MCF 10A (cell line): ENCODE measurements at regions of chr2 and their contacts with region 1.

Region 1: GRCh38 chr2:226984750-226985582 is 149.1 kb downstream of the RHBDD1 start:
- DNase-seq: peak; percentile 61
- H3K4me3 Mint-ChIP-seq: no peak overlapping the region
- H3K27ac Mint-ChIP-seq: no peak overlapping the region
- H3K4me1 Mint-ChIP-seq: peaks cover 15% of the 10 kb centered on the region
- H3K27me3 Mint-ChIP-seq: no peaks in the 10 kb centered on the region
- CTCF ChIP-seq: peak; percentile 61

Region 2: GRCh38 chr2:225668606-225669266 is 1316.2 kb before region 1 on chr2:
- CTCF ChIA-PET with region 1: interaction called, 9 read pairs
- POLR2A ChIA-PET with region 1: interaction called, 5 read pairs
- intact Hi-C with region 1: loop called (anchors 1 kb)
- DNase-seq: peak; percentile 77
- H3K4me3 Mint-ChIP-seq: no peak overlapping the region
- H3K27ac Mint-ChIP-seq: no peak overlapping the region
- H3K4me1 Mint-ChIP-seq: peaks cover 5% of the 10 kb centered on the region
- H3K27me3 Mint-ChIP-seq: no peaks in the 10 kb centered on the region
- CTCF ChIP-seq: peak; percentile 74

Region 3: DNA sequence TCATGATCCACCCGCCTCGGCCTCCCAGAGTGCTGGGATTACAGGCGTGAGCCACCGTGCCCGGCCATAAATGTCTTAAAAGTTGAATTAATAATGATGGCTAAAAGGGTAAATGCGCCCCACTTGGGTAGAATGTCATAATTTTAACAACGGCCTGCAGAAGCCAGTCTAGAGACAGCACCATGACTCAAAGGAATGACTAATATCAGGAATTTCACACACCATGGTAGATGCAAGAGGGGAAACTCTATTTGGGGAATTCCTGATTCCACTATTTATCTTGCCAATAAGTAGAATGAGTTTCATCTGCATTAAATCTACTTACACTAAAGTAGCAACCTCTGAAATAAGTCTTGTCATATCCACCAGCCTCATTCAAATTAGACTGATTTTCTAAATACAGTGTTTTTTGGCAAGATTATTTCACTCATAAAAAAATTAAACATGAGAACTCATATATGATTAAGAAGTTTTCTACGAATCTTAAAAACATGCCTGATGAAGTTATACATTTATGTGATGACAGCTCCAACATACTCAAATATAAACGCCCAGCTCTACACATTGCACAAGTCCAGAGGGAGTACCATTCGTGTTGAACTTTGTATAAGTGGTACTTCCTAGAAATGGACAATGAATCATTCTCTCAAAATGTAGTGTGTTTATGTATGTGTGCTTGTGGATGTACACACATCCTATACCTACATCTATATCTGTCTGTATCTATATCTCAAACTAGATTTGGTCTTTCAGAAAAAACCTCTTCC is 495.0 kb before region 1 on chr2:
- CTCF ChIA-PET with region 1: no interaction called
- POLR2A ChIA-PET with region 1: no interaction called
- intact Hi-C with region 1: no loop called
- DNase-seq: peak; percentile 81
- H3K4me3 Mint-ChIP-seq: no peak overlapping the region
- H3K27ac Mint-ChIP-seq: peak overlapping the region; percentile 39
- H3K4me1 Mint-ChIP-seq: peaks cover 7% of the 10 kb centered on the region
- H3K27me3 Mint-ChIP-seq: no peaks in the 10 kb centered on the region
- CTCF ChIP-seq: no peak

Region 4: DNA sequence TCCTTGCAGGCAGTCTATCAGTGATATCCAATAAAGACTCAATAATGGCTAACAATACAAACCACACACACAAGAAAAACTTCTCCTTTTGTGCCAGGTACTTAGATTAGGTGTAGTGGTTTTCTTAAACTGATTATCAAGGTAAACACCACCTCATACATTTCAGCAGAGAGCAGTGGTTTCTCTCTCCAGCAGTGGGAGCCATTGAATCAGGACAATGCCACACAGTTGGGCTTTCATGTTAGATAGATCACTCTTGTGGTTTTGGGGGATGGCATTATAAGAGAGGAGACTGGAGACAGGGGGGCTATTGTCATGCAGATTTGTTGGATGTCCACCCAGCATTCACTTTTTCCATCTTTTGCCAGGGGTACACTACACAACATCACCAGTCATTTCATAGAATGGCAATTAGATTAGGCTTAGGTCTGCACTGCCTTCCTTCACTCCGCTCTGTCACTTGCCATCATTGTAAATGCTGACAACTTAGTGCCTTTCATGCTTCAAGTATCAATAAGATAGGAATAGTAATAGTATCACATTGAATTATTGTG is 171.7 kb before region 1 on chr2:
- CTCF ChIA-PET with region 1: interaction called, 6 read pairs
- POLR2A ChIA-PET with region 1: no interaction called
- intact Hi-C with region 1: loop called (anchors 1 kb)
- DNase-seq: no peak
- H3K4me3 Mint-ChIP-seq: no peak overlapping the region
- H3K27ac Mint-ChIP-seq: no peak overlapping the region
- H3K4me1 Mint-ChIP-seq: no peaks in the 10 kb centered on the region
- H3K27me3 Mint-ChIP-seq: peaks cover 27% of the 10 kb centered on the region
- CTCF ChIP-seq: peak; percentile 32

Region 5: DNA sequence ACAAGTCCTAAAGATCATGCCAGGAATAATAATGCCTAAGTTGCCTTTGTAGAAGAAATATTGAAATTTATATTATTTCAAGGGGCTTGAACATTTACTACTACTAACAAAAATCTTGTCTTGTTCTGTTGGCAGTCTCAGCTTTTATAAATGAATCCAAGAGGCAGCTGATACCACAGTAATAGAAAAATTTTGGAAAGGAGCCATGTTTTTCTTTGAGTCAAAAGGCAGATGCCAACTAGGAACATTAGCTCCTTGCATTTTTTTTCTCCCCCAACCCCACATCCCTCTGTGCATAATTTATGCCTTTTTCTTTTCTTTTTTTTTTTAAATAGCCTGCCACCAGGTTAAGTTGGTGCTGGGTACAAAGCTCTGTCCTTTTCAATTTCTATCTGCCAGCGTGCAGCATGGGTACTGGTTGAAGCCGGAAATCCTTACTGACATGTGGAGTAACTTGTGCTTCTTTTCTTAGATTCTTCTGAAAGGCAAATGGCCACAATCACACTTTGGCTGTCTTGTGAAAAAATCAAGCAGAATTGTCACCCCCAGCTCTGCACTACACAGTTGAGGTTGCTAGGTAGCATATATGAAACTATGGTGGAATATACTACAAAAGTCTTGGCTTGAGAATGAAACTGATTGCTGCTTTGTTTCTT is 50.3 kb before region 1 on chr2:
- CTCF ChIA-PET with region 1: no interaction called
- POLR2A ChIA-PET with region 1: no interaction called
- intact Hi-C with region 1: no loop called
- DNase-seq: peak; percentile 6
- H3K4me3 Mint-ChIP-seq: no peak overlapping the region
- H3K27ac Mint-ChIP-seq: no peak overlapping the region
- H3K4me1 Mint-ChIP-seq: peaks cover 10% of the 10 kb centered on the region
- H3K27me3 Mint-ChIP-seq: no peaks in the 10 kb centered on the region
- CTCF ChIP-seq: no peak